Posterior vena cava (tissue), 2 donors: ENCODE measurements at regions of chr11 and their contacts with region 1.

Region 1: DNA sequence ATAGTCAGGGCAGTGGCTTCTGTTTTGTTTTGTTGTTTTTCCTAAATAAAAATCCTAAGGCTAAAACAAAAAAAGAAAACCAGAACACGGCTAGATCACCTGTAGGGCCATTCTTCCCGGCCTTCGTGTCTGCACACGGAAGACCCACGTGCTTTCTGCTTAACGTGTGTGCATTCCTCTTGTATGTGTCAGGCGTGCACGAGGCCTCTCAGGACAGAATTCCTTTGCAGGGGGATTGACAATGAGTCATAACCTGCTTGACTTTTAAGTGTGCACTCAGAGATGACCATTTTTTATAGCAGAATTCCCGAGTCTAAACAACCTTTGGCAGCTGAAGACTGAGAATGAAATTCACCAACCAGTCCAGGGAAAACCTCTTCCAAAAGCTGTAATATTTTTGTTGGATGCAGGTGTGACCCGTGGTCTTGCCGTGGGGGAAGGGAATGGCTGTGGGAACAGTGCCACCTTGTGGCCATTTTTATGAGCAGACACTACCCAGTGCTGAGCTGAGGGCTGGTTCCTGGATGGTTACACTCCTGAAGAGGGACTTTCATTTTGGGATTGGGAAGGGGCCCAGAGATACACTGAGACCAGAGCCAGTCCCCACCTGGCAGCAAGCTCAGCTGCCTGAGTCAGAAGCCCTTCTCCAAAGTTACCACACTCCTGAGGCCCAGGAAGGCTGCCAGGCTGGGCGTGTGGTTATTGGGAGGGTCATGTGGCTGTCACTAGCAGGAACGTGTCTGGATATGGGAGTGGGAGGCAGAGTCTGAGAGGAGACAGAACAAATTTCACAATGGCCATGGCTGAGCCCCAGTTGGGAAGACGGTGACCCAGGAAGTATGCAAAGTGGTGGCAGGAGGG is 35.8 kb upstream of the DKK3 start:
- DNase-seq: peak; percentile 95

Region 2: GRCh38 chr11:11806586-11806985 is 237.6 kb before region 1 on chr11:
- intact Hi-C with region 1: loop called in 1 of 2 experiments (anchors 10 kb)
- DNase-seq: no peak

Region 3: GRCh38 chr11:11931461-11932055 is 112.6 kb before region 1 on chr11:
- intact Hi-C with region 1: loop called (anchors 10 kb)
- DNase-seq: no peak

Region 4: DNA sequence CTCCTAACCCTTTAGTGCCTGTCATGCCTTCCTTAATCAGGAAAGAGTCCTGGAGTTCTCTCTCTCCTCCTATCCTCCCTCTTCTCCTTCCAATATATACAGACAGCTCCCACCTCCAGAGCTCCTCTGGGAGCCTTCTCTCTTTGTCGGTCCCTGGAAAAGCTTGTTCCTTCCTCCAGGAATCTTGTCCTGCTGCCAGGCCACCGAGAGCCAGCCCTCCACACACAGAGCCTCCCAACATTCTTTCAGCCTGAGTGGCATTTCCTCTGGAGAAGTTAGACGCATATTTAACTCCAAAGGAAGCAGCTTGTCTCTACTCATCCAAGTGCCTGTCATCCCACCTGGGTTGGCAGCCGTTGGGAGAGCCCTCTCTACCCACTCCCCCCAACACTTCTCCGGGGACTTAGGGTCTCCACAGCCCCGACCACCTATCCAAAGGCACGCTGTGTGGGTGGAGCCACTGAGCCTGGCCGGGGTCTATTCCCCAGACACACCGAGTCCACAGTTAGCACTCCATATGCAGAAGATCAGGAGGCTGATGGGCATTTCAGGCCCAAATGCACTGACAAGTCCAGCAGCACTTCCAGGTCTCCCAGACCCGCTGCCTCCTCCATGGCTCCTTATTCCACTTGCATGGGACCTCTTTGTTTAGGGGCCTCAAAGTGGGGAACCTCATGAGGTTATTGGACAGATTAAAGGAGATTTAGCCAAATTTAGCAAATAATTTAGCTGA is 66.8 kb before region 1 on chr11:
- intact Hi-C with region 1: loop called in 1 of 2 experiments (anchors 5 kb)
- DNase-seq: peak; percentile 93

Region 5: DNA sequence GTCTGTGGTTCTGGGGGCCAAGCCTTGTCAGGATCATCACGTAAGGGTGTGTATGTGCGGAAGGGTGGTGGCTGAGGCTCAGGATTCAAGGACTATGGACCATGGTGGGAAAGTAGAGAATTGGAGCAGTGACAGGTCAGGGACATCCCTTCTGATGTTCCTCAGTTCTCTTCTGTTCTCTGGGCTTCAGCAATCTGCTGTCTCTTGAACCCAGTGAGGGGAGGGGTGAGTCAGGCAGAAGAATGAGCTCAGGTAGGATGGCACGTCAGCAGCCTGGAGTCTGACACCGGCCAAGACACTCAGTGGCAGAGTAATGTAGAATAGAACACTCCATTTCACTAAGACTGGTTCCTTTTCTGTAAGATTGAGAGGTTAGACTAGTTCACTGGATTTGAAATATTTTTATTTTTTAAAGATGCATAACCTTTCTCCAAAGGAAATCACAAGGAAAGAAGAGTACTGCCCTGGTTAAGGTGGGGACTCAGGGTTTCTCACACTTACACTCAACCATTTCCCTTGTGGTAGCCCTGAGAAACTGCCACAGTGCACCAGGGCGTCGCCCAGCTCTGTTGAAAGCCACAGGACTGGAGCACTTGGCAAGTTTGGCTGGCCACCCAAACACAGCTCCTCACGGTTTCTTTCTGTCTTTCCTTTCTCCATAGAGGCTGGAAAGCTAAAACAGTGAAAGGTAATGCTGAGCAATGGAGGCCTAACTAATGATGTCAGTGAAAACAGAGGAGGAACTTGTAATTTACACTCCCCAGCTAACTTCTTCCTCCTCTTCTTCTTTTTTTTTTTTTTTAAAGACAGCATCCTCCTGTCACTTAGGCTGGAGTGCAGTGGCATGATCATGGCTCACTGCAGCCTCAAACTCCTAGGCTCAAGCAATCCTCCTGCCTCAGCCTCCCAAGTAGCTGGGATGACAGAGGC is 43.2 kb after region 1 on chr11:
- intact Hi-C with region 1: loop called in 1 of 2 experiments (anchors 5 kb)
- DNase-seq: no peak

Region 6: GRCh38 chr11:12200279-12201010 is 156.3 kb after region 1 on chr11:
- intact Hi-C with region 1: no loop called
- DNase-seq: no peak

Region 7: GRCh38 chr11:12235947-12236743 is 192.0 kb after region 1 on chr11:
- intact Hi-C with region 1: loop called in 1 of 2 experiments (anchors 5 kb)
- DNase-seq: no peak

Region 8: GRCh38 chr11:12281571-12282478 is 237.6 kb after region 1 on chr11:
- intact Hi-C with region 1: loop called (anchors 1 to 5 kb)
- DNase-seq: peak; percentile 95